Naive thymus-derived CD8-positive, alpha-beta T cell (primary cell): ENCODE measurements at regions of chr17 and their contacts with region 1.

Region 1: DNA sequence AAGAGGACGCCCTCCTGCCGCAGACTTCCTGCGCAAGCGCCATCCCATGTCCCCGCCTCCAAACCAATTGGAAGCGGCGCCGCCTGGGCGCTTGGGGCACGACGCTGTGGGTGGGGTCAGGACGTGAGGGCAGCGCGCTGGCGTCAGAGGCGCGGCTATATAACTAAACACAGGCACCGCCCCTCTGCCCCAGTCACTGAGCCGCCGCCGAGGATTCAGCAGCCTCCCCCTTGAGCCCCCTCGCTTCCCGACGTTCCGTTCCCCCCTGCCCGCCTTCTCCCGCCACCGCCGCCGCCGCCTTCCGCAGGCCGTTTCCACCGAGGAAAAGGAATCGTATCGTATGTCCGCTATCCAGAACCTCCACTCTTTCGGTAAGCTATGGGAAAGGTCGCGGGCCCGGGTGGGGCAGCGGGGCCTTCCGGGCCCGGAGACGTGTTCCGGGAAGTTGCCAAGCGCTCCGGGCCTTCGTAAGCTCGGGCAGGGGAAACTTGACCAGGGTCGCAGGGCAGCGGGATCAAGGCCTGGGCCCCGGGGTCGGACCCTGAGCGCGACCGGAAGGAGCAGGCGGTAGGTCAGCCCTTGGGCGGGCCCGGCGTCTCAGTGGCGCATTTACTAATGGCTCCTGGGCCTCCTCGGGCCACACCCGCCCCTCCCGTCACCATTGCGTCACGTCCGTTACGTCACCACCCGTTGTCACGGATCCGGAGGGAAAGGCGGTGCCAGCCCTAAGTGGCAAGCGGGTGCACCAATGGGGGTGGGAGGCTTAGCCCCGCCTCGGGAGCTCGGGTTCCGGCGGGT is at the start of gene EIF1:
- DNase-seq: peak; percentile 96 to 100 (median 100)
- ATAC-seq: peak; percentile 59 to 75
- H3K4me3 Mint-ChIP-seq: peak within 1 kb of the TSS; percentile 90 to 99 (median 96)
- H3K27ac Mint-ChIP-seq: peak within 1 kb of the TSS; percentile 97 to 100 (median 99)
- H3K4me1 Mint-ChIP-seq: peaks cover 26 to 47% (median 45%) of the 10 kb centered on the region in 4 donors
- H3K27me3 Mint-ChIP-seq: no peaks in the 10 kb centered on the region
- polyA plus RNA-seq, gene EIF1: 1,100 to 1,335 (median 1,160) TPM

Region 2: GRCh38 chr17:40139566-40140058 is 1549.3 kb before region 1 on chr17:
- POLR2A ChIA-PET with region 1: interaction called, 11 read pairs
- DNase-seq: peak in 1 of 10 donors; percentile 11
- ATAC-seq: peak in 1 of 2 donors; percentile 26
- H3K4me3 Mint-ChIP-seq: peak overlapping the region; percentile 86 to 98 (median 95)
- H3K27ac Mint-ChIP-seq: peak overlapping the region; percentile 95 to 100 (median 99)
- H3K4me1 Mint-ChIP-seq: peaks cover 14 to 51% (median 41%) of the 10 kb centered on the region in 4 donors
- H3K27me3 Mint-ChIP-seq: peaks cover 0 to 1% (median 0%) of the 10 kb centered on the region in 5 donors

Region 3: DNA sequence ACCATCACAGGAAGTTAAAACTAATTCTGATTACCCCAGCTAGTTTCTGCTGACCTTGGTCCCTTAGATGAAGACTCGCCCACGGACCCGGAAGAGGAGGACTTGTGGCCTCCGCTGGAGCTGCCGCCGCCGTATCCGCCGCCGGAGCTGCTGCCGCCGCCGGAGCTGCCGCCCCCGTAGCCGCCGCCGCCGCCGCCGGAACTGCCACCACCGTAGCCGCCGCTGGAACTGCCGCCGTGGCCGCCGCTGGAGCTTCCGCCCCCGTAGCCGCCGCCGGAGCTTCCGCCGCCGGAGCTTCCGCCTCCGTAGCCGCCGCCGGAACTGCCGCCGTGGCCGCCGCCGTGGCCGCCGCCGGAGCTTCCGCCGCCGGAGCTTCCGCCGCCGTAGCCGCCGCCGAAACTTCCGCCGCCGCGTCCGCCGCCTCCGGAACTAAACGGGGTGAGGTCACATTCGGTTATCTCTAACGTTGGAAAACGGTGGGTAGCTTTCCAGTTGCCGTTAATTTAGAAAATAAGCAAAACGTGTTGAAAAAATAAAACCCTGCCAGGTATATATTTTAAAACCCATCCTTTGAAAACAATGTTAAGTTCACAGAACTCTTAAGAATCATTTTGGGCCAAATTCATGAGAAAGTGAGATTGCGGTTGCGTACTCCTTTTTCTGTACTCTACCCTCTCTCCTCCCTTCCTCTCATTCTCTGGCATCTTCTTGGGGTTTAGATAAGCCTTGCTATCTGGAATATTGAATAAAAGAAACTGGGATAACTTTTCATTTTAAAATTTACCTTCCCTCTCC is 870.0 kb before region 1 on chr17:
- POLR2A ChIA-PET with region 1: interaction called, 36 read pairs
- DNase-seq: peak; percentile 74 to 88 (median 81)
- ATAC-seq: peak; percentile 88
- H3K4me3 Mint-ChIP-seq: peak overlapping the region; percentile 88 to 99 (median 92)
- H3K27ac Mint-ChIP-seq: peak overlapping the region; percentile 87 to 98 (median 96)
- H3K4me1 Mint-ChIP-seq: peaks cover 5 to 24% (median 17%) of the 10 kb centered on the region in 4 donors
- H3K27me3 Mint-ChIP-seq: peaks cover 8 to 15% (median 10%) of the 10 kb centered on the region in 5 donors

Region 4: GRCh38 chr17:41648411-41649195 is 40.3 kb before region 1 on chr17:
- POLR2A ChIA-PET with region 1: interaction called, 13 read pairs
- DNase-seq: peak; percentile 67 to 91 (median 83)
- ATAC-seq: peak; percentile 90 to 93
- H3K4me3 Mint-ChIP-seq: peak overlapping the region; percentile 63 to 92 (median 82)
- H3K27ac Mint-ChIP-seq: peak overlapping the region in 7 of 10 donors; percentile 41 to 93 (median 88)
- H3K4me1 Mint-ChIP-seq: peaks cover 9 to 10% (median 10%) of the 10 kb centered on the region in 4 donors
- H3K27me3 Mint-ChIP-seq: peaks cover 0 to 3% (median 0%) of the 10 kb centered on the region in 5 donors

Region 5: GRCh38 chr17:41672153-41672552 is 16.7 kb before region 1 on chr17:
- POLR2A ChIA-PET with region 1: interaction called, 271 read pairs
- DNase-seq: no peak
- ATAC-seq: no peak
- H3K4me3 Mint-ChIP-seq: no peak overlapping the region
- H3K27ac Mint-ChIP-seq: no peak overlapping the region
- H3K4me1 Mint-ChIP-seq: peaks cover 0 to 22% (median 2%) of the 10 kb centered on the region in 4 donors
- H3K27me3 Mint-ChIP-seq: no peaks in the 10 kb centered on the region

Region 6: DNA sequence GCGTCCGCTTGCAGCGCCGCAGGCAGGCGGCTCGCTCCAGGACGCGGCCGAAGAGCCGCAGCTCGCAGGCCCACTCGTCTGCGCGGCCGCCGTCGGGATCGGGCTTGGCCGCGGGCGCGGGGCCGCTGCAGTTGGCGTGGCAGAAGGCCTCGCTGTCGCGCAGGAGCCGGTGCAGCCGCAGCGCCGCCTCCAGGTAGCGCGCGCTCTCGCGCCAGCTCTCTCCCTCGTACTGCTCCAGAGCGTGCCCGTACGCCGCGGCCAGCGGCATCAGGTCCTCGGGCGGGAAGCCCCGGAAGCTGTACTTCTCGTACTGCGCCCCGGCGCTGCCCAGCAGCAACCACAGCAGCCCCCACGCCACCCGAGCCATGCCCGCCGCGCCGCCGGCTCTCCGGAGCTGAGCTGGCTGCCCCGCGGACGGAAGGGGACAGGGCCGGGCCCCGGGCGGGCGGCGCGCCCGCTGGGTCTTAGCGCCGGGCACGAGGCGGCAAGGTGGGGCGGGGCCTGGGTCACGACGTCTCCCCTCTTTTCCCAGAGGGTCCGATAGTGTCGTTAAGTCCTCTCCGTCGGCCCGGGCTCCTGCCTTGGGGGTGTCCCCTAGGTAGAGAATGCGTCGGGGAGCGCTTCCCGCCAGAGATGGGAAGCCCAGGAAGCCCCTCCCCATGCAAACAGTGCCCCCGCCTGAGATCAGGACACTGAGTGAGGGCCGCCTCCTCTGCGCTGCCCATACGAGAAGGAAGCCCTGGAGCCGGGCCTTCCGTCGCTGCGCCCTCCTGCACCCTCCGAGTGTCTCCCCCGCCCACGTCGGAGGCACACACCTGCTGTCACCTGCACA is 122.9 kb after region 1 on chr17 and contains the start of gene P3H4:
- POLR2A ChIA-PET with region 1: interaction called, 29 read pairs
- DNase-seq: peak; percentile 57 to 83 (median 75)
- ATAC-seq: peak; percentile 91 to 92
- H3K4me3 Mint-ChIP-seq: peak within 1 kb of the TSS; percentile 87 to 97 (median 93)
- H3K27ac Mint-ChIP-seq: peak within 1 kb of the TSS; percentile 15 to 95 (median 83)
- H3K4me1 Mint-ChIP-seq: peaks cover 17 to 26% (median 24%) of the 10 kb centered on the region in 4 donors
- H3K27me3 Mint-ChIP-seq: peaks cover 0 to 4% (median 0%) of the 10 kb centered on the region in 5 donors
- polyA plus RNA-seq, gene P3H4: 4.0 to 6.2 (median 5.8) TPM

Region 7: GRCh38 chr17:42019509-42020404 is 330.9 kb after region 1 on chr17 and contains the start of gene NKIRAS2:
- POLR2A ChIA-PET with region 1: interaction called, 12 read pairs
- DNase-seq: peak; percentile 86 to 96 (median 90)
- ATAC-seq: peak; percentile 72
- H3K4me3 Mint-ChIP-seq: peak within 1 kb of the TSS; percentile 83 to 100 (median 100)
- H3K27ac Mint-ChIP-seq: peak within 1 kb of the TSS; percentile 66 to 100 (median 92)
- H3K4me1 Mint-ChIP-seq: peaks cover 29 to 73% (median 67%) of the 10 kb centered on the region in 4 donors
- H3K27me3 Mint-ChIP-seq: no peaks in the 10 kb centered on the region
- polyA plus RNA-seq, gene NKIRAS2: 20.5 to 30.2 (median 21.9) TPM